ENCODE measurements at regions of chr4 and their contacts with region 1.

Region 1: GRCh38 chr4:150867148-150867547 is 147.9 kb downstream of the LRBA start:
- DNase-seq: peak in 7 of 9 donors; percentile 50 to 69 (median 64)
- ATAC-seq: peak; percentile 94
- H3K4me3 ChIP-seq: no peak overlapping the region
- H3K4me3 Mint-ChIP-seq: no peak overlapping the region
- H3K27ac ChIP-seq: no peak overlapping the region
- H3K27ac Mint-ChIP-seq: no peak overlapping the region
- H3K4me1 ChIP-seq: no peaks in the 10 kb centered on the region
- H3K4me1 Mint-ChIP-seq: no peaks in the 10 kb centered on the region
- H3K27me3 ChIP-seq: no peaks in the 10 kb centered on the region
- H3K27me3 Mint-ChIP-seq: no peaks in the 10 kb centered on the region

Region 2: DNA sequence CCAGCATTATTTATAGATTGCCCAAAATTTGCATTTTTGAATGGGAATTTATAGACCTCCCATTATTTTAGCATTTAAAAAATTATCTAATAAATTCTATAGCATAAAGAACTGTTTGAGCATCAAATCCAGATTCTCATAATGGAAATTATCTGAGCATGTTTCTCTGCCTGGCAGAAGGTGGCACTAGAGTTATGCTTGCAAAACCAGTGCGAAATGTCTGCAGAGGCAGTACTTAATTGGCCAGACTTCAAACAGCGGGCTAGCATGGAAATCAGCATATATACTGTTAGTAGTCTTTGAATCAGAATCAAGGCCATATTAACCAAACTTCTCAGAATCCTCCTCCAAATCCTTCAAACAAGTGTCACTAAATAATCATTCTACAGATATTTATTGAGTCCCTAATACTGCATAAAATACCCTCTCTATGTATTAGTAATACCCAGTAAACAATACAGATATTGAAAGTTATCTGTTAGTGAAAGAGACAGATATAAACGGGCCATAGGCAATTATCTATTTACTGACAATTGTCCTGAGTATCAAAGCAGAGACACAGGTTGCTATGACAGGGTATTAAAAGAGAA is 867.6 kb before region 1 on chr4:
- CTCF ChIA-PET with region 1: no interaction called
- POLR2A ChIA-PET with region 1: no interaction called
- intact Hi-C with region 1: loop called in 1 of 2 experiments (anchors 5 kb)
- DNase-seq: no peak
- ATAC-seq: no peak
- H3K4me3 ChIP-seq: no peak overlapping the region
- H3K4me3 Mint-ChIP-seq: no peak overlapping the region
- H3K27ac ChIP-seq: no peak overlapping the region
- H3K27ac Mint-ChIP-seq: no peak overlapping the region
- H3K4me1 ChIP-seq: no peaks in the 10 kb centered on the region
- H3K4me1 Mint-ChIP-seq: peaks cover 0 to 5% (median 0%) of the 10 kb centered on the region in 7 donors
- H3K27me3 ChIP-seq: no peaks in the 10 kb centered on the region
- H3K27me3 Mint-ChIP-seq: peaks cover 5 to 18% (median 16%) of the 10 kb centered on the region in 5 donors

Region 3: GRCh38 chr4:150297861-150298474 is 569.2 kb before region 1 on chr4:
- CTCF ChIA-PET with region 1: interaction called, 5 read pairs
- POLR2A ChIA-PET with region 1: no interaction called
- intact Hi-C with region 1: loop called (anchors 1 kb)
- DNase-seq: peak in 3 of 9 donors; percentile 1 to 8 (median 3)
- ATAC-seq: no peak
- H3K4me3 ChIP-seq: no peak overlapping the region
- H3K4me3 Mint-ChIP-seq: no peak overlapping the region
- H3K27ac ChIP-seq: no peak overlapping the region
- H3K27ac Mint-ChIP-seq: no peak overlapping the region
- H3K4me1 ChIP-seq: no peaks in the 10 kb centered on the region
- H3K4me1 Mint-ChIP-seq: peaks cover 0 to 11% (median 6%) of the 10 kb centered on the region in 7 donors
- H3K27me3 ChIP-seq: no peaks in the 10 kb centered on the region
- H3K27me3 Mint-ChIP-seq: no peaks in the 10 kb centered on the region

Region 4: GRCh38 chr4:150799207-150799606 is 67.9 kb before region 1 on chr4:
- CTCF ChIA-PET with region 1: no interaction called
- POLR2A ChIA-PET with region 1: no interaction called
- intact Hi-C with region 1: no loop called
- DNase-seq: no peak
- ATAC-seq: no peak
- H3K4me3 ChIP-seq: no peak overlapping the region
- H3K4me3 Mint-ChIP-seq: no peak overlapping the region
- H3K27ac ChIP-seq: no peak overlapping the region
- H3K27ac Mint-ChIP-seq: peak overlapping the region in 1 of 9 donors; percentile 14
- H3K4me1 ChIP-seq: no peaks in the 10 kb centered on the region
- H3K4me1 Mint-ChIP-seq: peaks cover 0 to 2% (median under 1%) of the 10 kb centered on the region in 7 donors
- H3K27me3 ChIP-seq: no peaks in the 10 kb centered on the region
- H3K27me3 Mint-ChIP-seq: no peaks in the 10 kb centered on the region

Region 5: DNA sequence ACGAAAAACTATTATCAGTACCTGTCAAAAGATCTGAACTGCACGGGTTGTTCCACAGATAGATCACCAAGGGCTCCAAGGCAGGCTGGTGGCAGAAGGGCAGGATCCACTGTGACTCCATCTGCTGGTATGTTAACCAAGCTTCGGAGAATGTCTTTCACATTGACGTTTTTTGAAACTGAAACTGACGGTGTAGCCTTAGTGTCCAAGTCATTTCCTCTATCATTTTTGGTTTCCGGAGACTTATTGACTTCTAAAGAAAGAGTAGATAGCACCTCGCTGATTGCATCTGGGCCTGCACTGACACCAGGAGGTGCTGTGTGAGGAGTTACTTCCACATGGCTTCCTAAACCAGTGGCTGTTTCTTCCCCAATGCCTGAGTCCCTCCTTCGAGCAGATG is 39.0 kb before region 1 on chr4:
- CTCF ChIA-PET with region 1: no interaction called
- POLR2A ChIA-PET with region 1: no interaction called
- intact Hi-C with region 1: loop called in 1 of 2 experiments (anchors 5 kb)
- DNase-seq: peak in 2 of 9 donors; percentile 0 to 24
- ATAC-seq: peak; percentile 96
- H3K4me3 ChIP-seq: peak overlapping the region; percentile 2
- H3K4me3 Mint-ChIP-seq: peak overlapping the region in 3 of 10 donors; percentile 5 to 64 (median 35)
- H3K27ac ChIP-seq: no peak overlapping the region
- H3K27ac Mint-ChIP-seq: peak overlapping the region in 2 of 9 donors; percentile 12 to 81
- H3K4me1 ChIP-seq: peaks cover 0 to 26% of the 10 kb centered on the region in 2 donors
- H3K4me1 Mint-ChIP-seq: peaks cover 4 to 34% (median 13%) of the 10 kb centered on the region in 7 donors
- H3K27me3 ChIP-seq: no peaks in the 10 kb centered on the region
- H3K27me3 Mint-ChIP-seq: no peaks in the 10 kb centered on the region

Region 6: GRCh38 chr4:150886599-150886998 is 19.5 kb after region 1 on chr4:
- CTCF ChIA-PET with region 1: no interaction called
- POLR2A ChIA-PET with region 1: no interaction called
- intact Hi-C with region 1: no loop called
- DNase-seq: no peak
- ATAC-seq: no peak
- H3K4me3 ChIP-seq: no peak overlapping the region
- H3K4me3 Mint-ChIP-seq: no peak overlapping the region
- H3K27ac ChIP-seq: no peak overlapping the region
- H3K27ac Mint-ChIP-seq: peak overlapping the region in 1 of 9 donors; percentile 21
- H3K4me1 ChIP-seq: peaks cover 0 to 10% of the 10 kb centered on the region in 2 donors
- H3K4me1 Mint-ChIP-seq: peaks cover 0 to 19% (median 3%) of the 10 kb centered on the region in 7 donors
- H3K27me3 ChIP-seq: no peaks in the 10 kb centered on the region
- H3K27me3 Mint-ChIP-seq: no peaks in the 10 kb centered on the region

Measured in naive thymus-derived CD4-positive, alpha-beta T cell (primary cell).